ENCODE measurements at regions of chr2 and their contacts with region 1.

Region 1: GRCh38 chr2:224952936-224953657 is 89.2 kb downstream of the DOCK10 start:
- DNase-seq: peak; percentile 76 to 83 (median 78)
- H3K4me3 ChIP-seq: peak overlapping the region in 1 of 3 experiments; percentile 12
- H3K4me3 Mint-ChIP-seq: peak overlapping the region in 1 of 2 donors; percentile 13
- H3K27ac ChIP-seq: peak overlapping the region; percentile 65 to 73
- H3K27ac Mint-ChIP-seq: peak overlapping the region; percentile 80 to 95 (median 91)
- H3K4me1 ChIP-seq: peaks cover 75% of the 10 kb centered on the region in 2 donors
- H3K4me1 Mint-ChIP-seq: peaks cover 72% of the 10 kb centered on the region
- H3K27me3 ChIP-seq: no peaks in the 10 kb centered on the region
- H3K27me3 Mint-ChIP-seq: no peaks in the 10 kb centered on the region
- CTCF ChIP-seq: no peak

Region 2: DNA sequence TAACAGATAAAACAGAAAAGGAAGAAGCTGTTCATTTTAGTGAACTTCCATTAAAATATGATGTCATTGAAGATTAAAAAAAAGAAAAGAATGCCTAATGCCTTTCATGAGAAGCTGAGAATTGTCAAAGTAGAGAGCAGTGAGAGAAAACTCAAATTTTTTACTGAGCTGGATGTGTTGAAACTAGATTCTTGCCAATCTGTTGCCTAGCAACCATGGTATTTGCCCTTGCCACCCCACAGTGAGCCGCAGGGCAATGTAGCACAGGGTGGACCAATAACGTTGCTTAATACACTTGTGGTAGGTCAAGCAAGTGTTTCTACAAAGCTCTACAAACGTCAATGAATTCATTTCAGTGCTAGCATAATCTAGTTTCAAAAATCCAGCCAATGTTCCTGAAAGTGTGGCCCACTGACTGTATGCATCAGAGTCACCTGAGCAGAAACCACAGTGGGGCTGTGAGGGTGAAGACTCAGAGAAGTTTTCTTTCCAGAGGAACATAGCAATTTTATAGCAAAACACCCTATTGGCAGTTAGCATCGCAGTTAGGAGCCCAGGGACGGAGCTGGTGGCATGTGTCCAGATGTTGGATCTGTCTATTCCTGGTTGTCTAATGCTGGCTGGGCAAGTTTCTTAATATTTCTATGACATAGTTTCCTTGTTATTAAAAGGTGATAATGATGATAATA is 43.1 kb before region 1 on chr2:
- intact Hi-C with region 1: loop called in 1 of 2 experiments (anchors 5 kb)
- DNase-seq: peak; percentile 84 to 95 (median 84)
- H3K4me3 ChIP-seq: no peak overlapping the region
- H3K4me3 Mint-ChIP-seq: no peak overlapping the region
- H3K27ac ChIP-seq: peak overlapping the region; percentile 55 to 71
- H3K27ac Mint-ChIP-seq: peak overlapping the region; percentile 86 to 96 (median 94)
- H3K4me1 ChIP-seq: peaks cover 12 to 18% of the 10 kb centered on the region in 2 donors
- H3K4me1 Mint-ChIP-seq: peaks cover 23% of the 10 kb centered on the region
- H3K27me3 ChIP-seq: no peaks in the 10 kb centered on the region
- H3K27me3 Mint-ChIP-seq: peaks cover 0 to 1% (median 0%) of the 10 kb centered on the region in 3 donors
- CTCF ChIP-seq: no peak

Region 3: DNA sequence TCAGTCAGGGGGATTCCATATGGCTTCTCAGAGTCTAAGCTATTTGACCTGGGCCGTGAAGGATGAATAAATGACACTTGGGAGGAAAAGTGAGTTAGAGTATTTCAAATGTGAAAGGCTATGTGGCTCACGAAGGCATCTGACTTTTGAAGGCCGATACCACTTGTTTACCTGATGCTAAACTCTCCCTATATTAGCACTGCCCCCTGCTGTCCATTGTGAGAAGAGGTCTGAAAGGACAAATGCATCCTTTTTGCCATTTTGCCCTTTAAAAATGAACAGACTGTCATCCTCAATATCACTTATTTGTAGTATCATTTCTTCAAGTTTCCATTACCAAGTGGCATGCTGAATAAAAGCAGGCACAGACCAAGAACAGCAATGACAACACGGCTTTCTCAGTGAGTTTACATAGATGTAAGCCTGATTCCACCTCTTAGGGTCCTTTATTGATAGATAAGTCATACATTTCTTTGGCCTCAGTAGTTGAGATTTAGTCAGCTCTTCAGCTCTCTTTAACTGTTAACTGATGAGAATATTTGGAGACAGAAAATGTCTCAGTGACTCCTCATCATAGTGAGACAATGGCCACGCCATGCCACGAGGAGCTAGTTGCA is 49.0 kb after region 1 on chr2:
- intact Hi-C with region 1: loop called in 1 of 2 experiments (anchors 10 kb)
- DNase-seq: peak; percentile 63 to 73 (median 73)
- H3K4me3 ChIP-seq: no peak overlapping the region
- H3K4me3 Mint-ChIP-seq: peak overlapping the region in 1 of 2 donors; percentile 64
- H3K27ac ChIP-seq: peak overlapping the region in 1 of 2 donors; percentile 58
- H3K27ac Mint-ChIP-seq: peak overlapping the region in 6 of 7 donors; percentile 12 to 76 (median 46)
- H3K4me1 ChIP-seq: peaks cover 6 to 7% of the 10 kb centered on the region in 2 donors
- H3K4me1 Mint-ChIP-seq: peaks cover 19% of the 10 kb centered on the region
- H3K27me3 ChIP-seq: no peaks in the 10 kb centered on the region
- H3K27me3 Mint-ChIP-seq: peaks cover 0 to 1% (median 0%) of the 10 kb centered on the region in 3 donors
- CTCF ChIP-seq: peak; percentile 82

Region 4: DNA sequence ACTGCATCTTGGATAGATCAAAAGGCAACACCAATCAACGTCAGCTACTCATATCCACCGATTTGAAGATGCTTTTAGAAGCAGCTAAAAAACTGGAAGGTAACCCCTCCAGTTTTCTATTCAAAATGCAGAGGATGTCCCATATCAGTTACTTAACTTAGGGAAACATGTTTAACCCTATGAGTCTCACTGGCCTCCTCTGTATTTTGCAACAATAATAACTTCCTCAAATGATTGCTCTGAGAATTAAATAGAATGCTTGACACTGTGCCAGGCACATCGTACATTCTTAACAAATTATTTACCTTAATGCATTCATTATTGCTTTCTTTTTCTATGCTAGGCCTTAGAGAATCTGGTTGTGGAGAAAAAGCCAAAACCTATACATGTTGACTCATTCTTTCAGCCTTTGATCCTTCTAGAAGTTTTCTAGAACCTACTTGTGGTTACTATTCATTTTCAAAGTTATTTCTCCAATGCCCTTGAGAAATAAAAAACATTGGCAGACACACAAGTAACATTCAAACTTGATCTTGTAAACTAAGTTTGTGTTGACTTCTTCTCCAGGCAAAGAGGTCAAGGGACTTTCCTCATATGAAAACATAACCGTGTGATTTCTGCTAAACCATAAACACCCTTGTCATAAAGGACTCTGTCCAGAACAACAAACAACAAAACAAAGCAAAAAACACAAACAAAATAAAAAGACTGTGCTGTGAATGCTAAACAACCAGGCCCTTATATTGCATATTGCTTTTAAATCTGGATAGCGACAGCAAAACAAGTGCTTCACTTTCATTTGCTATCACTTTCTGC is 84.5 kb after region 1 on chr2:
- intact Hi-C with region 1: loop called in 1 of 2 experiments (anchors 5 kb)
- DNase-seq: peak; percentile 8 to 56 (median 22)
- H3K4me3 ChIP-seq: no peak overlapping the region
- H3K4me3 Mint-ChIP-seq: peak overlapping the region in 1 of 2 donors; percentile 46
- H3K27ac ChIP-seq: no peak overlapping the region
- H3K27ac Mint-ChIP-seq: peak overlapping the region in 1 of 7 donors; percentile 12
- H3K4me1 ChIP-seq: peaks cover 38 to 49% of the 10 kb centered on the region in 2 donors
- H3K4me1 Mint-ChIP-seq: peaks cover 64% of the 10 kb centered on the region
- H3K27me3 ChIP-seq: no peaks in the 10 kb centered on the region
- H3K27me3 Mint-ChIP-seq: no peaks in the 10 kb centered on the region
- CTCF ChIP-seq: no peak